ENCODE measurements at regions of chr4 and their contacts with region 1.

Region 1: GRCh38 chr4:170027181-170027829 is 1.1 kb upstream of the MFAP3L start:
- DNase-seq: peak; percentile 93
- H3K4me3 Mint-ChIP-seq: peak overlapping the region; percentile 79
- H3K27ac Mint-ChIP-seq: peak overlapping the region; percentile 71
- H3K4me1 Mint-ChIP-seq: peaks cover 9% of the 10 kb centered on the region
- H3K27me3 Mint-ChIP-seq: peaks cover 16% of the 10 kb centered on the region

Region 2: DNA sequence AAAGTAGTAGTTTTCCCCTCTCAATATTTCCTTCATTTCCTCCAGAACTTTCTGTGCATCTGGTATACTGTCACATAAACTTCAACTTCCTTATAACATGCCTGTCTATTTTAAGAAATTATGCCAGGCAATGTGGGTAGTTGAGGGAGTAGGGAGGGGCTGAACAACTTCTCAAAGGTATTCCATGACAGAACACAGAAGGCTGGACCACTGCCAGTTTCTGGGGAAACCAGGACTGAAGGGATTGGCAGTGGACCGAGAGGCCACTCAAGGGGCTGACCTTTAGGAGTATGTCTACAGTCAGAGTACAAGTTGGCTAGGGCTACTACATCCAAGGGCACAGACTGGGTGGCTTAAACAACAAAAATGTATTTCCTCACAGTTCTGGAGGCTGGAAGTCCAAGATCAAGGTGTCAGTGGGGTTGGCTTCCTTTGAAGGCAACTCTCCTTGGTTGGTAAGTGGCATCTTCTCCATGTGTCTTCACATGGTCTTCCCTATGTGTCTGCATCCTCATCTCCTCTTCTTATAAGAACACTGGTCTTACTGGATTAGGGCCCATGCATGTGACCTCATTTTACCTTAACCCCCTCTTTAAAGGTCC is 763.4 kb before region 1 on chr4:
- CTCF ChIA-PET with region 1: no interaction called
- POLR2A ChIA-PET with region 1: no interaction called
- intact Hi-C with region 1: no loop called
- DNase-seq: no peak
- H3K4me3 Mint-ChIP-seq: no peak overlapping the region
- H3K27ac Mint-ChIP-seq: no peak overlapping the region
- H3K4me1 Mint-ChIP-seq: no peaks in the 10 kb centered on the region
- H3K27me3 Mint-ChIP-seq: peaks cover 23% of the 10 kb centered on the region

Region 3: DNA sequence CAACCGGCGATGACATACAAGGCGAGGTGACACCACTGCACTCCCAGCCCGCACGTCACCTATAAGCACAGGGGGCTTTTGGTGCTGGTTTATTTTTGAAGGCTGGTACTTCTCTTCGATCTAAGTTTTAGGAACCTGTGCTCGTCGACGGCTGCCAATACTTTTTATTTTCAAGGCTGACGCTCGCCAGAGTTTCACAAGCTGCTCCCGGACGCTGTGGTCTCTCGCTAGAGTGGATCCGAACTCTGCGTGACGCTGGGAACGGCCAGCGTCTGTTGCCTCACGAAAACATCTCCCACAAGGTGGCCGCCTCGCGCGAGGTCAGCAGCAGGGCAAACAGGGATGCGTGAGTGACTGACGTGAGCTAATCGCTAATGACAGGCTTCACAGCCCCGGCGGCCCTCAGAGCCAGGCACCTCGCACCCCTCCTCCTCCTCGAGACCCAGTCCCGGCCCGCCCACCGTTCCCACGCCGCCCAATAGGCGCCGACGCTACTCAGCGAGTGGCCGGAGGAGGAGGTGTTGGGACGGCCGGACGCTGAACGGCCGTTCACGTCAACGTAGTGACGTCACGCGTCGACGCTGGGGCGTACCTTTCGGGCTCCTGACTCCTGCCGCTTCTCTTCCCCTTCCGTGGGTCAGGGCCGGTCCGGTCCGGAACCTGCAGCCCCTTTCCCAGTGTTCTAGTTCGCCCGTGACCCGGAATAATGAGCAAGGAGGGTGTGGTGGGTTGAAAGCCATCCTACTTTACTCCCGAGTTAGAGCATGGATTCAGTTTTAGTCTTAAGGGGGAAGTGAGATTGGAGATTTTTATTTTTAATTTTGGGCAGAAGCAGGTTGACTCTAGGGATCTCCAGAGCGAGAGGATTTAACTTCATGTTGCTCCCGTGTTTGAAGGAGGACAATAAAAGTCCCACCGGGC is 407.1 kb before region 1 on chr4 and contains the start of gene CLCN3:
- CTCF ChIA-PET with region 1: interaction called, 3 read pairs
- POLR2A ChIA-PET with region 1: no interaction called
- intact Hi-C with region 1: loop called (anchors 1 kb)
- DNase-seq: peak; percentile 94
- H3K4me3 Mint-ChIP-seq: peak within 1 kb of the TSS; percentile 96
- H3K27ac Mint-ChIP-seq: peak within 1 kb of the TSS; percentile 98
- H3K4me1 Mint-ChIP-seq: peaks cover 60% of the 10 kb centered on the region
- H3K27me3 Mint-ChIP-seq: no peaks in the 10 kb centered on the region
- total RNA-seq, gene CLCN3: 17.3 to 18.6 TPM

Region 4: GRCh38 chr4:169659716-169660670 is 367.3 kb before region 1 on chr4:
- CTCF ChIA-PET with region 1: no interaction called
- POLR2A ChIA-PET with region 1: no interaction called
- intact Hi-C with region 1: loop called (anchors 1 kb)
- DNase-seq: peak; percentile 80
- H3K4me3 Mint-ChIP-seq: peak overlapping the region; percentile 68
- H3K27ac Mint-ChIP-seq: peak overlapping the region; percentile 91
- H3K4me1 Mint-ChIP-seq: peaks cover 22% of the 10 kb centered on the region
- H3K27me3 Mint-ChIP-seq: no peaks in the 10 kb centered on the region

Region 5: GRCh38 chr4:169707958-169708643 is 319.2 kb before region 1 on chr4:
- CTCF ChIA-PET with region 1: no interaction called
- POLR2A ChIA-PET with region 1: no interaction called
- intact Hi-C with region 1: no loop called
- DNase-seq: no peak
- H3K4me3 Mint-ChIP-seq: no peak overlapping the region
- H3K27ac Mint-ChIP-seq: no peak overlapping the region
- H3K4me1 Mint-ChIP-seq: peaks cover 3% of the 10 kb centered on the region
- H3K27me3 Mint-ChIP-seq: no peaks in the 10 kb centered on the region

Region 6: DNA sequence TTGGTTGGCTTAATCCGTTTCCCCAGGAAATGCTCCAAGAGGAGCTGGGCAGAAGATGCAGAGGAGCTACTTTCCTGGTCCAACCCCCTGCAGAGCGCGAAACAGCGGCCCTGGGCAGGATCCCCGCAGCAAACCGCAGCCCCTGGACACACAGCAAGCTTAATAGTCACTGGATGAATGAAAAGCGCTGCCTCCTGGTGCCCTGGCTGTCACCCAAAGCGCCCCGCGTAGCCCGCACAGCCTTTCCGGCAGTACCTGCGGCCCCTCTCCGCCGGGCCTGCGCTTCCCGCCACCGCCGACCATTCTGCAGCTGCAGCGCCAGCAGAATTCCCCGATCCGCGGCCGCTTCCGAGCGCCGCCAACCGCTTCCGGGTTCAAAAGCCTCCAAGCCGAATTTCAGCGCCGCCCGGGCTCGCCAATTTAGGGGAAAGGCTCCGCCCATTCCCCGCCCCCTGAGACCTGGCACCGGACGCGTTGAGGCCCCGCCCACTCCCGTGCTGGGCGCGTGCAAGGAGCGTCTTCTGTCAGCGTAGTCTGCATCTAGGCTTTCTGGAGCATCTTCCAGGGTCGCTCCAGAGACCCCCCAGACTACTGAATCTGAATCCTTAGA is 269.6 kb before region 1 on chr4 and contains the start of gene HPF1:
- CTCF ChIA-PET with region 1: no interaction called
- POLR2A ChIA-PET with region 1: no interaction called
- intact Hi-C with region 1: loop called (anchors 1 kb)
- DNase-seq: peak; percentile 97
- H3K4me3 Mint-ChIP-seq: peak within 1 kb of the TSS; percentile 83
- H3K27ac Mint-ChIP-seq: peak within 1 kb of the TSS; percentile 70
- H3K4me1 Mint-ChIP-seq: peaks cover 24% of the 10 kb centered on the region
- H3K27me3 Mint-ChIP-seq: no peaks in the 10 kb centered on the region
- total RNA-seq, gene HPF1: 36.6 to 41.1 TPM

Region 7: GRCh38 chr4:169791527-169792156 is 235.7 kb before region 1 on chr4:
- CTCF ChIA-PET with region 1: no interaction called
- POLR2A ChIA-PET with region 1: no interaction called
- intact Hi-C with region 1: loop called (anchors 5 kb)
- DNase-seq: peak; percentile 35
- H3K4me3 Mint-ChIP-seq: peak overlapping the region; percentile 3
- H3K27ac Mint-ChIP-seq: no peak overlapping the region
- H3K4me1 Mint-ChIP-seq: peaks cover 16% of the 10 kb centered on the region
- H3K27me3 Mint-ChIP-seq: peaks cover 50% of the 10 kb centered on the region

Region 8: DNA sequence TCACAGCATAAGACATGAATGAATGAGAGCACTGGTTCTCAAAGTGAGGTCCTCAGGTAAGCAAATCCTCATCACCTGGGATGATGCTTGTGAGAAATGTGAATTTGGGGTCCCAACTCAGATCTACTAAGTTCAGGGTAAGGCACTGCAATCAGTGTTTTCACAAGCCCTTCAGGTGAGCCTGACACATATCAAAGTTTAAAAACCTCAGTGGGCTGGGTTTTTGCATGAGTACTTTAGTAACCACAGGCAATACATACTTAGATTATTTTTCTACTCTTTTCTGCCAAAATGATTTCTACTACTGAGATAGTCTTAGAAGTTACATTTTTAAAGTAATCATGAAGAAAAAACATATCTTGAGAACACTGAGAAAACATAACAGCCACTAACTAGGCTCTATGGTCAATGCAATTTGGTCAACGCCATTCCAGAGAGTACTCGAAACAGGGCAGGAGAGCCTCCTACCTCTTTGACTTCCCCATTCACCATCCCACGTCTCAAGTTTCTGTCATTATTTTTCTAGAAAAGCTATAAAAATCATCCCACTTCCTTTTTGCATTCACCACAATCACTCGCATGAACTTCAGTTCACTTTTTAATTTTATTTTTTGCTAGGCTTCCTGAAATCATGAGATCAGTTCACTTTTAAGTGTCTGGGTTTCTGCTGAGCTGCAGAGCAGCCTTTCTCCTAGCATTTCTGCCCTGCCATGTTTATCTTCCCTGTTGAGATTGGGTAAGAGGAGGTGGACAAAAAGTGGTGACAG is 74.9 kb before region 1 on chr4:
- CTCF ChIA-PET with region 1: no interaction called
- POLR2A ChIA-PET with region 1: no interaction called
- intact Hi-C with region 1: no loop called
- DNase-seq: no peak
- H3K4me3 Mint-ChIP-seq: no peak overlapping the region
- H3K27ac Mint-ChIP-seq: no peak overlapping the region
- H3K4me1 Mint-ChIP-seq: no peaks in the 10 kb centered on the region
- H3K27me3 Mint-ChIP-seq: peaks cover 7% of the 10 kb centered on the region

Region 9: DNA sequence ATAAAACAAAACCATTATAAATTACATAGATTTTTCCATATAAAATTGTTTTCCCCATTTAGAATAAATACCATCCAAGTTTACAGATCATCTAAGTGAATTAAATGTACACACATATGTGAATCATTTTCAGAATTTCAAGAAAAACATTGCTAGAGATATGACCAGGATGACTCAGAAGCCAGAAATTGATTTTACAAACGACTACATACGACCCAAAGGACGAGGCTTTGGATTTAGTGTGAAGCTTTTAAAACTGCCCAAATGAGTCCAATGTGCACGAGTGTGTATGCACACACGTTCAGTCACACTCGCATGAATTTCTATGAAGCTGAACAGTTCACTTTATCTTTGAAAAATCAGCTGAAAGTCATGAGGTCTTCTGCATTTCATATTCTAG is 39.1 kb before region 1 on chr4:
- CTCF ChIA-PET with region 1: no interaction called
- POLR2A ChIA-PET with region 1: no interaction called
- intact Hi-C with region 1: loop called (anchors 5 kb)
- DNase-seq: no peak
- H3K4me3 Mint-ChIP-seq: no peak overlapping the region
- H3K27ac Mint-ChIP-seq: no peak overlapping the region
- H3K4me1 Mint-ChIP-seq: peaks cover 14% of the 10 kb centered on the region
- H3K27me3 Mint-ChIP-seq: peaks cover 2% of the 10 kb centered on the region